Activated T-helper 2 cell treated with anti-CD3 and anti-CD28 coated beads, Interferon-gamma antibody, Interleukin-2, Interleukin-4, amounts not matched to agents 10 μg/mL and 5 μg/mL and 100 μg/mL, durations not matched to agents 14 hours and 24 hours and 36 hours (primary cell): ENCODE measurements at regions of chr16 and their contacts with region 1.

Region 1: GRCh38 chr16:23182460-23183309 is at the start of gene SCNN1G:
- DNase-seq: peak; percentile 64
- H3K4me3 Mint-ChIP-seq: no peak within 1 kb of the TSS
- H3K27ac Mint-ChIP-seq: no peak within 1 kb of the TSS
- H3K4me1 Mint-ChIP-seq: peaks cover 3% of the 10 kb centered on the region
- H3K27me3 Mint-ChIP-seq: peaks cover 41% of the 10 kb centered on the region
- total RNA-seq, gene SCNN1G: not detected in 2 replicates

Region 2: GRCh38 chr16:23435500-23435899 is 252.8 kb after region 1 on chr16:
- intact Hi-C with region 1: loop called (anchors 1 kb)
- DNase-seq: peak; percentile 45
- H3K4me3 Mint-ChIP-seq: no peak overlapping the region
- H3K27ac Mint-ChIP-seq: no peak overlapping the region
- H3K4me1 Mint-ChIP-seq: peaks cover 3% of the 10 kb centered on the region
- H3K27me3 Mint-ChIP-seq: no peaks in the 10 kb centered on the region